Lower leg skin (tissue), 4 donors: ENCODE measurements at regions of chr3 and their contacts with region 1.

Region 1: DNA sequence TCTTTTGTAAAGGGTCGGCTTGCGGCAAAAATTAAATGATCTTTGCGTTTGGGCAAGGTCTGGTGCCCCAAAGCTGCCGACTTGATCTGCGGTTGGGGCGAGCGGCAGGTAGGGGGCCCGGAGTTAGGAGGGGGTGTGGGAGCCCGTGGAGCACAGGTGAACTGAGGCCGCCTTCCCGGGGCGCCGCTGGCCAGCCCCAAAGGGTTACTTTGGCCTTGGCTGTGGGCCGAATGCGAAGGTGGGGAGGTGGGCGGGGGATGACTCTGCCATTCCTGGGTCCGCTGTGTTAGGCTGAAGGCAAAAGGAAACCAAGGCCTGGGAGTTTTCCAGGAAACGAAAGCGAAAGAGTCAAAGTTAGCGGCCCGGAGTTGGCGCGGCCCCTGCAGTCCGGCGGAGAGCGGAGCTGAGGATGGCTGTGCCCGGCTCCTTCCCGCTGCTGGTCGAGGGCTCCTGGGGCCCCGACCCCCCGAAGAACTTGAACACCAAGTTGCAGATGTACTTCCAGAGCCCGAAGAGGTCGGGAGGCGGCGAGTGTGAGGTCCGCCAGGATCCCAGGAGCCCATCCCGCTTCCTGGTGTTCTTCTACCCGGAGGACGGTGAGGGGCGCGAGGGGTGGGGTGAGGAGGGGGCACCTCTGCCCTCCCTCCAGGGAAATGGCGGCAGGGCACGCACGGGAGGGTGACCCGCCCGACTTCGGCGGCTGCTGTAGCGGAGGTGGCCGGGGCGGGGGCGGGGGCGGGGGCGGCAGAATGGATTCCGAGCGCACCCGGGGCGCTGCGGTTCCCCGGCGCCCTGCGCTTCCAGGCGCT is at the start of gene PARP14:
- DNase-seq: peak; percentile 51 to 93
- H3K4me3 ChIP-seq: peak within 1 kb of the TSS; percentile 88
- CTCF ChIP-seq: no peak
- POLR2A ChIP-seq: no peak
- total RNA-seq, gene PARP14: 4.9 to 14.5 (median 9.4) TPM

Region 2: GRCh38 chr3:122214711-122215110 is 466.0 kb before region 1 on chr3:
- intact Hi-C with region 1: no loop called
- DNase-seq: no peak
- H3K4me3 ChIP-seq: no peak overlapping the region
- CTCF ChIP-seq: no peak
- POLR2A ChIP-seq: no peak

Region 3: DNA sequence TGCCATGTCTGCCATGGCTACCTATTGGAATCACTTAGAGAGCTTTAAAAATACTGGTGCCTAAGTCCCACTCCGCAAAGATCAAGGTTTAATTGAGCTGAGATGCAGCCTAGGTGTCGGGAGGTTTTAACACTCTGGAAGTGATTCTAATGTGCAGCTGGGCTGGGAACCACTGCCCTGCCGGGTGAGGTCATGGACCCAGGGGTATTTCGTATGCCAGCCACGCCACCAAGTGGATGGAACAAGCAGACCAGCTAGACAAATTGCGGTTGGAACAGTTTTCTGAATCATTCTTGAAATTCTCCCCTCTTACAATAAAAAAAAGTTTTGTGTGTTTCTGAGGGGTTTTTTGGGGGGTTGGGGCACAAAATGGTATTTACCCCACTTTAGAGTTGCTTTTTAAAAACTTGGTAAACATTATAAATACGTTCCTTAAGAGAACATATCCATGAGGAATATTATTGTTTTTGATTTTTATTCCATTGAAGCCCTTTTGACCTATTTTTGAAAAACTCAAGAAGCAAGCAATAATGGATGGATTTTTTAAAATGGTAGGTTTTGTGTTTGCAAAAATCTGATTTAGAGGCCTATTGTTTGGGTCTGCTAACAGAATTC is 421.8 kb before region 1 on chr3:
- intact Hi-C with region 1: no loop called
- DNase-seq: no peak
- H3K4me3 ChIP-seq: no peak overlapping the region
- CTCF ChIP-seq: no peak
- POLR2A ChIP-seq: no peak

Region 4: DNA sequence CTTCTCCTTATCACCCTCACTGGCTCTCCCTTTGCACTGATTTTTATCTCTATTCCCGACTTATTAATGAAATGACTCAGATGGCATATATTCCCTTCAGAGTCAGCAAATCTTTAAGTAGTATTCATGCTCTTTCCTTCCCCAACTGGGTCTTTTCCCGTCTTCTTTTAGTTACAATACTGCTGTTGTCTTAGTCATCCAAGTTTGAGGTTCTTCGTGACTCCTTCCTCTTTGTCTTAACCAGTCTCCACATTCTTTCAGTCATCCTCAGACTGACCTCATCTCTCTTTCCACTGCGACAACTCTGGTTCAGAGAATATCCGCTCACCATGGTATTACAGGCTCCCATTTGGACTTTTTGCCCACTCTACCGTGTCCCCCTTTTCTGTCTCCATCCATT is 277.2 kb before region 1 on chr3:
- intact Hi-C with region 1: loop called (anchors 10 kb)
- DNase-seq: no peak
- H3K4me3 ChIP-seq: no peak overlapping the region
- CTCF ChIP-seq: no peak
- POLR2A ChIP-seq: no peak